Activated CD4-positive, alpha-beta memory T cell treated with anti-CD3 and anti-CD28 coated beads, Interleukin-2, amount 10 ng/mL, durations not matched to agents 7 days and 5 days (primary cell): ENCODE measurements at regions of chr13 and their contacts with region 1.

Region 1: GRCh38 chr13:95301183-95301967 is at the start of gene ABCC4:
- DNase-seq: peak; percentile 63
- H3K4me3 Mint-ChIP-seq: peak within 1 kb of the TSS; percentile 76
- H3K27ac Mint-ChIP-seq: no peak within 1 kb of the TSS
- H3K4me1 Mint-ChIP-seq: peaks cover 23% of the 10 kb centered on the region
- H3K27me3 Mint-ChIP-seq: peaks cover 6% of the 10 kb centered on the region
- total RNA-seq, gene ABCC4: 3.8 to 4.5 TPM

Region 2: DNA sequence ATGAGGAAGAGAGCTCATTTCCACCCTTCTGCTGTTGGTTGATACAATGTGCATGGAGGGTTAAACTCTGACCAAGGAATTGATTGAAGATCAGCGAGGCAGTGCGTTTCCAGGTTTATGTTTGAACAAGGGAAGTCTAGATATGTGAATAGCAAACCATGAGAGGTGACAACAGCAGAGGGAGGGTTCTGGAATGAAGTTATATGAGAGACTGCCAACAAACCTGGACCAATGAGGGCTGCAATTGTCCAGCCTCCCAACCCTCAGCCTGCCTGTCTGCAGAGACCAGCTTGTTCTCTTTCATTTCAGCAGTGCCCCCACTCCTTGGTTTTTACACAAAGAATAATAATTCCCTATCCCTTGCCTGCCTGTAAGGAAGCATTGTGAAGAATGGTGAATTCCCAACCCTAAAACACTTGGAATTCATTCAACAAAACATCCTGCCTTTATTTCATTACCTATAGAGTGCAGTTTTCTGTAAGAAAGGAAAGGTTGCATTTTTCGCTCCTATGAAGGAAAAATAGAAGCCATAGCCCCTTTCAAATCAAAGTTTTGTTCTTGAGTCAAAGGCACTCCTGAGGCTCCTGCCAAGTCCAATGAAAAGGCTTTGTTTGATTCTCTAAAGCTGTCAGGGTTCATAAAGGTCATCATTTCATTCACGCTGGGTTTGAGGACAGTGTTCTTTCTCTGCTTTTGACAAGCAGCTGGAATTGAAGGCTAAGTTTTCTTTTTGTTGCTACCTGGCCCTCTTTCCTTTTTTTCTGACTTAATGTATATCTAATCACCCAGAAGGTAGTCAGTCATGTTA is 53.5 kb after region 1 on chr13:
- CTCF ChIA-PET with region 1: no interaction called
- POLR2A ChIA-PET with region 1: no interaction called
- DNase-seq: no peak
- H3K4me3 Mint-ChIP-seq: no peak overlapping the region
- H3K27ac Mint-ChIP-seq: no peak overlapping the region
- H3K4me1 Mint-ChIP-seq: no peaks in the 10 kb centered on the region
- H3K27me3 Mint-ChIP-seq: no peaks in the 10 kb centered on the region

Region 3: DNA sequence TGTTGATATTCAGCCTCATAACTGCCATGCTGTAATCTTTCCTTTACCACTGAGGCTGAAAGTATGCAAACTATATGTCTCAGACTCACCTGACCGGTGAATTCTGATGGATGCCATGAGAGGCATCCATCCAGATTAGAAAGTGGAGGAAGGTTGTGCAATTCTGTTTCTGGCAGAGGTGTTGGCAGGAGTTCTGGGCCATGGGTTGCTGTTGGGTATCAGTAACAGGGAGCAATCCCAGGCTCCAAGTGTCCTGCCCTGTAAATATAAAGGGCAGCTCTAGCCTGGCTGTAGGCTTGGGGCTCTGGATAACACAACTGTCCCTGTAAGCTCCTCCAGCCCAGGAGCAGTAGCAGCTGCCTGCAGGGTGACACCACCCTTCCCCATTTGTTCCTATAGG is 77.2 kb after region 1 on chr13:
- CTCF ChIA-PET with region 1: interaction called, 12 read pairs
- POLR2A ChIA-PET with region 1: interaction called, 3 read pairs
- DNase-seq: no peak
- H3K4me3 Mint-ChIP-seq: no peak overlapping the region
- H3K27ac Mint-ChIP-seq: no peak overlapping the region
- H3K4me1 Mint-ChIP-seq: peaks cover 5% of the 10 kb centered on the region
- H3K27me3 Mint-ChIP-seq: peaks cover 3% of the 10 kb centered on the region